Mammary epithelial cell (primary cell): ENCODE measurements at regions of chr4 and their contacts with region 1.

Region 1: GRCh38 chr4:176789955-176790354 is 2.8 kb downstream of the VEGFC start:
- DNase-seq: peak; percentile 80
- H3K4me3 ChIP-seq: peak overlapping the region in 2 of 3 experiments; percentile 81 to 94
- H3K27ac ChIP-seq: peak overlapping the region; percentile 73
- H3K4me1 ChIP-seq: peaks cover 25% of the 10 kb centered on the region
- H3K27me3 ChIP-seq: no peaks in the 10 kb centered on the region
- CTCF ChIP-seq: peak; percentile 74 to 89

Region 2: DNA sequence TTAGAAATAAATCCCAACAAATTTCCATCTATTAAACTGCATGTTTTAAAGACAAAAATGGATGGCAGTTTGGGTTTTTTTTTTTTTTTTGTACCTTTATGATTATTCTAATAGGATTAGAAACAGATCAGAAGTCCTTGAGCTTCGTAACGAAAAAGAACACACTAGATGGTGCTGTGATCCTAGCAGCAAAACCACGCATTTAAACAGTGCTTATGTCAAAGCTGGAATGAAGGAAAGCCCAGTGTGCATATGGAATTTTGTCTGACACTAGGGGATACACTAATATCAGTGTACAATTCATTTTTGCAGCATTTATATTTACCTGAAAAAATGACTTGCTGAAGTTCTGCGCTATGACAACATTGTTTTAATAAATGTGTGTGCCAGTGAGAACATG is 226.4 kb before region 1 on chr4:
- CTCF ChIA-PET with region 1: no interaction called
- dilution Hi-C with region 1: no loop called
- in situ Hi-C with region 1: no loop called
- intact Hi-C with region 1: loop called (anchors 10 kb)
- DNase-seq: no peak
- H3K4me3 ChIP-seq: no peak overlapping the region
- H3K27ac ChIP-seq: no peak overlapping the region
- H3K4me1 ChIP-seq: peaks cover 6% of the 10 kb centered on the region
- H3K27me3 ChIP-seq: peaks cover 1% of the 10 kb centered on the region
- CTCF ChIP-seq: peak in 1 of 2 donors; percentile 10

Region 3: DNA sequence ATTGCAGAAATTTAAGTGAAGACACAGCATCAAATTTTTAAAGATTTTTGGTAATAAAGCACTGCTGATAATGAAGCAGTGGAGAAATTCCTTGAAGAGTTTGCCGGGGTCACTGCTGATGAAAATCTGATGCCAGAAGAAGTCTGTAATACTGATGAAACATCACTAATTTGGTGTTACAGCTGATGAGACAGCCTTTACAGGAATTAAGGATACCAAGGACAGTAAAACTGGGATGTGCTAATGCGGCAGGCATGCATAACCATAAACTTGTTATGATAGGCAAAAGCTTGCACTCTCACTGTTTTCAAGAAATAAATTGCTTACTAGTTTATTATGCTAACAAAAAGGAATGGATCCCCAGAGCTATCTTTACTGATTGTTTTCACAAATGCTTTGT is 55.7 kb after region 1 on chr4:
- CTCF ChIA-PET with region 1: no interaction called
- dilution Hi-C with region 1: no loop called
- in situ Hi-C with region 1: no loop called
- intact Hi-C with region 1: loop called (anchors 1 kb)
- DNase-seq: peak; percentile 83
- H3K4me3 ChIP-seq: no peak overlapping the region
- H3K27ac ChIP-seq: no peak overlapping the region
- H3K4me1 ChIP-seq: peaks cover 27% of the 10 kb centered on the region
- H3K27me3 ChIP-seq: no peaks in the 10 kb centered on the region
- CTCF ChIP-seq: no peak

Region 4: GRCh38 chr4:176964116-176964691 is 174.2 kb after region 1 on chr4:
- CTCF ChIA-PET with region 1: no interaction called
- dilution Hi-C with region 1: no loop called
- in situ Hi-C with region 1: no loop called
- intact Hi-C with region 1: loop called (anchors 2 kb)
- DNase-seq: peak; percentile 32
- H3K4me3 ChIP-seq: no peak overlapping the region
- H3K27ac ChIP-seq: no peak overlapping the region
- H3K4me1 ChIP-seq: no peaks in the 10 kb centered on the region
- H3K27me3 ChIP-seq: no peaks in the 10 kb centered on the region
- CTCF ChIP-seq: peak; percentile 46 to 63

Region 5: GRCh38 chr4:177047070-177047850 is 257.3 kb after region 1 on chr4:
- CTCF ChIA-PET with region 1: interaction called, 3 read pairs
- dilution Hi-C with region 1: no loop called
- in situ Hi-C with region 1: loop called in 1 of 2 experiments (anchors 25 kb)
- intact Hi-C with region 1: loop called (anchors 1 kb)
- DNase-seq: peak; percentile 49
- H3K4me3 ChIP-seq: no peak overlapping the region
- H3K27ac ChIP-seq: no peak overlapping the region
- H3K4me1 ChIP-seq: no peaks in the 10 kb centered on the region
- H3K27me3 ChIP-seq: no peaks in the 10 kb centered on the region
- CTCF ChIP-seq: peak; percentile 85 to 88